Activated naive CD8-positive, alpha-beta T cell treated with anti-CD3 and anti-CD28 coated beads, Interleukin-2, amount 10 ng/mL, durations not matched to agents 7 days and 5 days (primary cell): ENCODE measurements at regions of chr11 and their contacts with region 1.

Region 1: DNA sequence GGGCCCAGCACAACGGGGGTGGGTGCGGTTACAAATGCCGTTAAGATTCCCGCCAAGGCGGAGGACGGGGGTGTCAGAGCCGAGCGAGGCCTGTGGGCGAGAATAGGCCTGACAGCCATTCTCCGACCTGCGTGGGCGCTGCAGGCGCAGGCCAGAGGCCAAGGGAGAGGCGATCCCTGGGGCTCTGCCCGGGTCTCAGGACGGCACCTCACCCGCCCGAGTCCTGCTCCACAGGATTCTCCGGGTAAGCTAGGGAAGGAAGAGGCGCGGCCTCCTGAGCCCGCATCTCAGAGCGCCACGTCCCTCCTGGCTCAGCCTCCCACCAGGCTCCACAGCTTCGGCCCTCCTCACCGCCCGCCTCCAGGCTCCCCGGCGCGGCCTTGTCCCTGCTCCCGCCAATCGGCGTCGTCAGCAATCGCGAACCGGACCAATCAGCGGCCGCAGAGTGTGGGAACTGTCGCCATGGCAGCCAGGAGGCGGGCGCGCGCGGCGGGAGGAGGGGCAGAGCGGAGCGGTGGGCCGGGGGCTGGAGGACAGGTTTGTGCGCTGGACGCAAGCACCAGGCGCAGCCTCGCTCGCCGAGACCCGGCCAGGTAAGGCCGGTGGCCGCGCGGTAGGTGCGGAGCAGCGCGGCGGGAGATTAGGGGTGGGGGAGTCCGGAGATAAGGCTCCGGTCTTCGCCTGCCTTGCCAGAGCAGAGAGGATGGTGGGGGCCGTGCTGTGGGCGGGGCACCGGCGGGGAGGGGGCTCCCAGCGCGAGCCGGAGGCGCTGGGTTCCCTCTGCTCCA is at the start of gene NUCB2:
- DNase-seq: peak; percentile 98
- ATAC-seq: peak; percentile 94
- H3K4me3 Mint-ChIP-seq: peak within 1 kb of the TSS; percentile 93
- H3K27ac Mint-ChIP-seq: peak within 1 kb of the TSS; percentile 94
- H3K4me1 Mint-ChIP-seq: peaks cover 43% of the 10 kb centered on the region
- H3K27me3 Mint-ChIP-seq: peaks cover 5% of the 10 kb centered on the region
- total RNA-seq, gene NUCB2: 168 to 170 TPM

Region 2: DNA sequence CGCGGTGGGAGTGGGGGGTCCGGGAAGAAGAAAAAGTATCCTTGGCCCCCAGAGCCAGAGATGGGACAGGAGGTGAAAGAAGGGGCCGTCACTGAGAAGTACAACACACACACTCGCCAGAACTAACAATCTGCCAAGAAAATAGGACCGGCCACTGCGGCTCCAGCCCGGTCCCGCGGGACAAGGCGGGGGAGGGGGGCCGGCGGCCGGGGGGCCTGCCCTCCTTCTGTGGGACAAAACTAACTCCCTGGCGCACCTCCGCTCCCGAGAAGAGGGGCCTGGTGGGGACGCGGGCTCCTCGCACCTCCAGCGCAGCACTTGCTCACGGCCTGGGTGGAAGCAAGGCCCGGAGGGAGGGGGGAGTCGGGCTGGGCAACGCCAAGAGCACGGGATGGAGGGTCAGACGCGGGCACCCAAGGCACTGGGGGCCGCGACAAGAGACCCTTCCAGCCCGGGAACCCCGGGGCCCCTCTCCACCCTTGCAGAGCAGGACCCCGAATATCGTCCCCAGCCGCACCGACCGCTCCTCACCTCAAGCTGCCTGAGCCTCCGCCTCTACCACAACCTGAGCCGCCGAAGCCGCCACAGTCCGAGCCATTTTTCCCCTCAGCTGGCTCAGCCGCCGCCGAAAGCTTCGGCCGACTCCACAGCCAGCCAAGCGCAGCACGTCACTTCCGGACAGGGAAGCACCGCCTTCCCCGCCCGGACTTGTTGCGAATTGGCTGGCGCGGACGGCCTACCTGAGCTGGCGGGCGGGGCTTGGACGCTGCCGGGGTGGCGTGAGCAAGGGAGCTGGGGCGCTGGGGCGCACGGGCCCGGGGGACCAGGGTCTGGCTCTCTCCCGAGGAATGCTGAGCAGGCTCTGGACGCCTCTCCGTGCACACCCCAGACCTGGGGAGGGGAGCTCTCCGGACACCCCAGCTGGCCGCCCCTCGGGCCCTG is 68.8 kb before region 1 on chr11 and contains the start of gene PIK3C2A:
- POLR2A ChIA-PET with region 1: interaction called, 15 read pairs
- DNase-seq: peak; percentile 93
- ATAC-seq: peak; percentile 98
- H3K4me3 Mint-ChIP-seq: peak within 1 kb of the TSS; percentile 100
- H3K27ac Mint-ChIP-seq: peak within 1 kb of the TSS; percentile 98
- H3K4me1 Mint-ChIP-seq: peaks cover 28% of the 10 kb centered on the region
- H3K27me3 Mint-ChIP-seq: no peaks in the 10 kb centered on the region
- total RNA-seq, gene PIK3C2A: 27.6 to 31.4 TPM

Region 3: DNA sequence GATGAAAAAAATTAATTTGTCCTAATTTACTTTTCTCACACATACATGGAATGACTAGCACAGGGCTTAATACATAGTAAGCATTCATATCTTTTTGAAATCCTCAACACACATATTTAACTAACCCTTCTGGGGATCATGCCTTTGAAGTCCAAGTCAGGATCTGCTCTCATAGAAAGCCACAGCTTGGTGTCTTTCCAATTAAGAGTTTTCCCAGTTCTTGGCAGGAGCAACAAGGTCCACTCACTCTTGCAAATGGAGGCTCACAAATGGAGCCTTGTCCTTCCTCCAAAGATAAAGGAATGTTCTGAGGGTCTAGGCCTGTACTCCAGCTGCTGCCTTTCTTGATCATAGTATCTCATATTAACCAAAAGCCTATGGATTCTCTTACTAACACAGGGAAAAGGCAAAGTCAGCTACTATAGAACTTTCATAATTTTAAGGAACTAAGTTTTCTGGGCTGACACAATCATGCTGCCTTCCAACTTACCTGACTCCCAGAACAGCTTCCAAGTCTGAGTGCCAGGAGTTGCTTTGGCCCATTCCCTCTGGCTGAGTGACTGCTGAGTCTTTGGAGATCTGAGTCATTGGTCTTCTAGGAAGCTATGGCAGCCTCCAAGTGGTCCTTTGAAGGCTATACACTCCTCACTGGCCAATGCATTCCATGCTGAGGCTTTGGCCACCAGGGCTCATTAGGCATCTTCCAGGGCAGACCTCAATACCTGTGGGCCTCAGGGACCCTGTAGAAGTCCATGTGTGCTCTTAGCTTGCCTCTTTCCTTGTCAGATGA is 25.7 kb before region 1 on chr11:
- POLR2A ChIA-PET with region 1: no interaction called
- DNase-seq: no peak
- ATAC-seq: no peak
- H3K4me3 Mint-ChIP-seq: no peak overlapping the region
- H3K27ac Mint-ChIP-seq: no peak overlapping the region
- H3K4me1 Mint-ChIP-seq: no peaks in the 10 kb centered on the region
- H3K27me3 Mint-ChIP-seq: peaks cover 13% of the 10 kb centered on the region

Region 4: GRCh38 chr11:17287058-17287457 is 10.6 kb after region 1 on chr11:
- POLR2A ChIA-PET with region 1: interaction called, 44 read pairs
- DNase-seq: no peak
- ATAC-seq: peak; percentile 62
- H3K4me3 Mint-ChIP-seq: peak overlapping the region; percentile 26
- H3K27ac Mint-ChIP-seq: peak overlapping the region; percentile 32
- H3K4me1 Mint-ChIP-seq: peaks cover 37% of the 10 kb centered on the region
- H3K27me3 Mint-ChIP-seq: no peaks in the 10 kb centered on the region

Region 5: DNA sequence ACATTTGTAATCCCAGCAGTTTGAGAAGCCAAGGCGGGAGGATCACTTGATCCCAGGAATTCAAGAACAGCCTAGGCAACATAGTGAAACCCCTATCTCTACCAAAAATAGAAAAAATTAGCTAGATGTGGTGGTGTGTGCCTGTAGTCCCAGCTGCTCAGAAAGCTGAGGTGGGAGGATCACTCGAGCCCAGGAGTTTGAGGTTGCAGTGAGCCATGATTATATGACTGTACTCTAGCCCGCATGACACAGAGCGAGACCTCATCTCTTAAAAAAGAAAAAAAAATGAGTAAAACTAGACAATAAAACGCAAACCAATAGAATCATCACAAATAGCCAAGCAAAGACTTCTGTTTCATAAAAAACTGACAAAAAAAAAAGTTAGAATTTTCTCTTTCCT is 21.9 kb after region 1 on chr11:
- POLR2A ChIA-PET with region 1: interaction called, 13 read pairs
- DNase-seq: no peak
- ATAC-seq: peak; percentile 36
- H3K4me3 Mint-ChIP-seq: no peak overlapping the region
- H3K27ac Mint-ChIP-seq: no peak overlapping the region
- H3K4me1 Mint-ChIP-seq: peaks cover 30% of the 10 kb centered on the region
- H3K27me3 Mint-ChIP-seq: no peaks in the 10 kb centered on the region